ENCODE measurements at regions of chr6 and their contacts with region 1.

Region 1: GRCh38 chr6:134938896-134939295 is 11.0 kb downstream of the ALDH8A1 start:
- DNase-seq: peak; percentile 85
- H3K4me3 Mint-ChIP-seq: no peak overlapping the region
- H3K27ac Mint-ChIP-seq: no peak overlapping the region
- H3K4me1 Mint-ChIP-seq: peaks cover 21% of the 10 kb centered on the region
- H3K27me3 Mint-ChIP-seq: no peaks in the 10 kb centered on the region

Region 2: GRCh38 chr6:134123666-134124208 is 815.2 kb before region 1 on chr6:
- CTCF ChIA-PET with region 1: interaction called, 15 read pairs
- intact Hi-C with region 1: loop called (anchors 1 kb)
- DNase-seq: no peak
- H3K4me3 Mint-ChIP-seq: no peak overlapping the region
- H3K27ac Mint-ChIP-seq: no peak overlapping the region
- H3K4me1 Mint-ChIP-seq: no peaks in the 10 kb centered on the region
- H3K27me3 Mint-ChIP-seq: no peaks in the 10 kb centered on the region

Region 3: DNA sequence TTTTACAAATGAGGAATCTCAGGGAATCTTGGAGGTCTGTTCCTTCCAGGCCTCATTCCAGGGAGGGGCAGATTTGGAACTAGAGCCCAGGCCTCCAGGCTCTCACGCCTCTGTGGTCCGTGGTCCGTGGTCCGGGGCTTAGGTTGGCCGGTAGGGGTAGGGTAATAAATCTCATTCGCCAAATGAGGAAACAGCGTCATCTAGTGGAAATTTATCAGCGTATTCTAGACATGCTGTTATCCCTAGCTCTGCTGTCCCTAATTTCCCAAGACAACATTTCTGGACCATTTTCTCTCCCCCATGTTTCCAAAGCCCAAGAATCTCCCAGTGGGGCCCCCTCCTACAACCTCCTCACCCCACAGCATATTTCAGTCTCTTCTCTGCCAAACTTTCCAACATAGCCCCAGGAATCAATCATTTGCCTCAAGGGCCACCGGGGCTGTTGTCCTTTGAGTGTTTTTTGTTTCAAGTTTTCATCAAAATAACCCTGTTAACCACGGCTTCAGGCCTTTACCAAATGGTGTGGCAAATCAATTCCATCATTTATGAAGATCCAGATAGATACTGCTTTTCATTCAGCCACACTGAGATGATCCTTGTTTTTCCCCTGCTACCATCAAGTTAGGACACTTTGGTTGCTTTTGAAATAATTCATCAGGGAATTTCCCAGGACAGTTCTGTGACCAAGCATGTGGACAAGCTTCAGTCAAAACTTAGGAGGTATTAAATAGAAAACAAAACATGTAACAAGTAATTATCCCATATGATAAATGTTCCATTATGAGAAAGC is 115.8 kb before region 1 on chr6:
- CTCF ChIA-PET with region 1: interaction called, 34 read pairs
- intact Hi-C with region 1: loop called (anchors 2 kb)
- DNase-seq: peak; percentile 39
- H3K4me3 Mint-ChIP-seq: no peak overlapping the region
- H3K27ac Mint-ChIP-seq: no peak overlapping the region
- H3K4me1 Mint-ChIP-seq: no peaks in the 10 kb centered on the region
- H3K27me3 Mint-ChIP-seq: no peaks in the 10 kb centered on the region

Region 4: GRCh38 chr6:134925800-134926199 is 13.1 kb before region 1 on chr6:
- CTCF ChIA-PET with region 1: interaction called, 28 read pairs
- intact Hi-C with region 1: no loop called
- DNase-seq: no peak
- H3K4me3 Mint-ChIP-seq: no peak overlapping the region
- H3K27ac Mint-ChIP-seq: no peak overlapping the region
- H3K4me1 Mint-ChIP-seq: no peaks in the 10 kb centered on the region
- H3K27me3 Mint-ChIP-seq: no peaks in the 10 kb centered on the region

Measured in activated naive CD4-positive, alpha-beta T cell treated with anti-CD3 and anti-CD28 coated beads for 36 hours (primary cell).